ENCODE measurements at regions of chr5 and their contacts with region 1.

Region 1: DNA sequence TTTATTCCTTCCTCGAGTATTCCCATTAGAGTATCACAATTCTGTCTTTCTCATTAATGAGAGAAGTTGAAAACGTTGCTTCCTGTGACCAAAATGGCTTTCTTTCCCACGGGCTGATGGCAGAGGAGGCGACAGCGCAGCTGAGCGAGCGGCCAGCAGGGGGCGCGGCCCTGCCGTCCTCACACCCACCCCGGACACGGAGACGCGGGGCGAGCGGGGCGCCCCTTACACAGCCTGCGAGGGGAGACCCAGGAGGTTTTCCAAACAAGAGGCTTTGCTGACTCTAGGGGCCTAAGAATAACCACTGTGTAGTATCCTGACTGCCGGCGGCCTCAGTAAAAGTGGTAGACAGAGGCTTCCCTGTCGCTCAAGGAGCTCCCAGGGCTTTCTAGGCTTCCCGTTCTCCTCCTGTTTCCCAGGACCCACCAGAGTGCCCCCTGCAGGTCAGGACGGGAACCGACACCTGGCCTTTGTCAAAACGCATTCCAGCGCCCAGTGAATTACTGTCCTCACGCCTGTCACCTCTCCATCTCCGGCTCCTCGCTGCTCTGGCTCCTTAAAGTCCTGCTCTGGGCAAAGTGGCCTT is 27.3 kb upstream of the FGF1 start:
- DNase-seq: peak; percentile 87
- H3K4me3 Mint-ChIP-seq: peak overlapping the region; percentile 71
- H3K27ac Mint-ChIP-seq: peak overlapping the region; percentile 3
- H3K4me1 Mint-ChIP-seq: peaks cover 3% of the 10 kb centered on the region
- H3K27me3 Mint-ChIP-seq: peaks cover 3% of the 10 kb centered on the region

Region 2: GRCh38 chr5:142655339-142656267 is 57.6 kb before region 1 on chr5:
- CTCF ChIA-PET with region 1: interaction called, 13 read pairs
- intact Hi-C with region 1: loop called (anchors 1 kb)
- DNase-seq: peak; percentile 77
- H3K4me3 Mint-ChIP-seq: no peak overlapping the region
- H3K27ac Mint-ChIP-seq: no peak overlapping the region
- H3K4me1 Mint-ChIP-seq: no peaks in the 10 kb centered on the region
- H3K27me3 Mint-ChIP-seq: peaks cover 5% of the 10 kb centered on the region

Region 3: GRCh38 chr5:142769741-142770631 is 56.8 kb after region 1 on chr5 and contains the start of gene ARHGAP26:
- CTCF ChIA-PET with region 1: interaction called, 6 read pairs
- intact Hi-C with region 1: loop called (anchors 2 kb)
- DNase-seq: peak; percentile 94
- H3K4me3 Mint-ChIP-seq: peak within 1 kb of the TSS; percentile 95
- H3K27ac Mint-ChIP-seq: peak within 1 kb of the TSS; percentile 81
- H3K4me1 Mint-ChIP-seq: peaks cover 37% of the 10 kb centered on the region
- H3K27me3 Mint-ChIP-seq: no peaks in the 10 kb centered on the region
- total RNA-seq, gene ARHGAP26: 17.0 to 19.5 TPM

Region 4: DNA sequence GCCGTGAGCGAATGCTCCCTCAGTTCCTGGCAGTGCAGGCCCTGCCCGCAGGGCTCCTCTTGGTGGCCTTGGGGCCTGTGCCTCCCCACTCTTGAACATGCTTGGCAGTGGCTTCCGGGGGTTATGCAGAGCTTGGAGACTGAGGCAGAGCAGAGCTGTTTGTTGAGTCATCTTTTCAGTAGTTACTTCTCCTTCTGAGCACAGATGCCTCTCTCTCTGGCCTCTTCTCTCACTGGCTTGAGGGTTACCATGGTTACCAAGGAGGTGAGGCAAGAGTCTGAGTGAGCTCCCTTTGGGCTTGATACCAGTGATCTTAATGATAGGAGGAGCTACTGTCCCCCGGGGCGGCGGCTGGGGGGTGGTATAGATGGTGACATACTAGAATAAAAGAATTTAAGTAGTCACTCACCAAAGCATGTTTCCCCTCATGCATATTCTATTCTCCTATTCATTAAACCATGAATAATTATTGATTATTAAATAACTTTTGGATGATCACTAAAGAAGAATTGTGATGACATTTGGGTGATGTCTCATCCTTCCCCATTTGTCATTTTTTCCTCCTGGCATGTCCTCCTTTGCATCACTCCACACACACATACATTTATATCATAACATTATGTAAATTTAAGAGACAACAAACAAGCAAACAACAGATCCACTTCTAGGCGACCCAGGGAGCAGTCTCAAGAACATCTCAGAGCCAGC is 168.0 kb after region 1 on chr5:
- CTCF ChIA-PET with region 1: interaction called, 184 read pairs
- intact Hi-C with region 1: loop called (anchors 1 kb)
- DNase-seq: no peak
- H3K4me3 Mint-ChIP-seq: no peak overlapping the region
- H3K27ac Mint-ChIP-seq: no peak overlapping the region
- H3K4me1 Mint-ChIP-seq: no peaks in the 10 kb centered on the region
- H3K27me3 Mint-ChIP-seq: no peaks in the 10 kb centered on the region

Region 5: GRCh38 chr5:142913728-142914338 is 200.6 kb after region 1 on chr5:
- CTCF ChIA-PET with region 1: interaction called, 7 read pairs
- intact Hi-C with region 1: loop called (anchors 1 kb)
- DNase-seq: no peak
- H3K4me3 Mint-ChIP-seq: no peak overlapping the region
- H3K27ac Mint-ChIP-seq: no peak overlapping the region
- H3K4me1 Mint-ChIP-seq: no peaks in the 10 kb centered on the region
- H3K27me3 Mint-ChIP-seq: no peaks in the 10 kb centered on the region